BJ (cell line): ENCODE measurements at regions of chr1 and their contacts with region 1.

Region 1: GRCh38 chr1:23035823-23036452 is 16.7 kb downstream of the KDM1A start:
- DNase-seq: no peak
- H3K4me3 ChIP-seq: no peak overlapping the region
- H3K27me3 ChIP-seq: no peaks in the 10 kb centered on the region
- CTCF ChIP-seq: no peak

Region 2: DNA sequence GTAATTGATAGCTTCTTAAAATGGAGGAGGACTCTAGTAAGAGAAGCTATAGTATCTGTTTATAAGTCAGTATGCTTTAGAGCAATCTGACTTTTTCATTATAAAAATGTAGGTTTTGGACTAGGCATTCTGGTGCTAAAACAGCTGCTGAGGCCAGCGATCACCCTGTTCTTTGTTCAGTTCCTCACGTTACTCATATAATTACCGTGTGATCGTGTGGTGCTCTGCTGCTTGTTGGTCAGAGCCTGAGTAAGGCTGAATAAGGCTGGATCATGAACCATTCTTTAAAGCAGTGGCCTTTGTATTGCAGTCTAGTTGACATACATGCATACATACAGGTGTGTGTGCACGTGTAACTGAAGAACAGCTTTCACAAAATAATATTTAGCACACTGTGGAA is 958.2 kb before region 1 on chr1:
- CTCF ChIA-PET with region 1: no interaction called
- POLR2A ChIA-PET with region 1: interaction called, 16 read pairs
- DNase-seq: no peak
- H3K4me3 ChIP-seq: no peak overlapping the region
- H3K27me3 ChIP-seq: no peaks in the 10 kb centered on the region
- CTCF ChIP-seq: no peak